GM18951 (cell line): ENCODE measurements at regions of chr11 and their contacts with region 1.

Region 1: GRCh38 chr11:108647701-108648527 is 17.0 kb upstream of the DDX10 start:
- POLR2A ChIP-seq: no peak

Region 2: DNA sequence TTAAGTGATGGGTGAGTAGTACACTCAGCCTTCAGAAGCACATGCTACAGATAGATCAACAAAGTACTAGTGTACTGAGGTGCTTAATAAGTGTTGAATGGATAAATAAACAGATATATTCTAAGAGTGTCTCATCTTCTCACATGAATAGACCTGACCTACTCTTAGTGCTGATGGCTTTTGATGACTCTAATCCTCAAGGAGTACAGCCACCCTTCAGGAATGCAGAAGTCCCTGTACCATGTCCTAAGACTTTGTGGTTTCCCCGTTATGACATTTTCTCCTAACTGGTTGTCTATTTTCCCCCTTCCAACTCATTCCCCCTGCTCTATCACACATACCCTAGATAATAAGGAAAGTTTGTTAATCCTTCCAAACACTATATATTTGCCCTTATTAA is 242.2 kb before region 1 on chr11:
- in situ Hi-C with region 1: loop called (anchors 25 kb)
- POLR2A ChIP-seq: no peak

Region 3: GRCh38 chr11:108467091-108467823 is 180.7 kb before region 1 on chr11 and contains the start of gene C11orf65:
- in situ Hi-C with region 1: no loop called
- POLR2A ChIP-seq: peak; percentile 91